Heart left ventricle (tissue), 16 donors: ENCODE measurements at regions of chr16 and their contacts with region 1.

Region 1: DNA sequence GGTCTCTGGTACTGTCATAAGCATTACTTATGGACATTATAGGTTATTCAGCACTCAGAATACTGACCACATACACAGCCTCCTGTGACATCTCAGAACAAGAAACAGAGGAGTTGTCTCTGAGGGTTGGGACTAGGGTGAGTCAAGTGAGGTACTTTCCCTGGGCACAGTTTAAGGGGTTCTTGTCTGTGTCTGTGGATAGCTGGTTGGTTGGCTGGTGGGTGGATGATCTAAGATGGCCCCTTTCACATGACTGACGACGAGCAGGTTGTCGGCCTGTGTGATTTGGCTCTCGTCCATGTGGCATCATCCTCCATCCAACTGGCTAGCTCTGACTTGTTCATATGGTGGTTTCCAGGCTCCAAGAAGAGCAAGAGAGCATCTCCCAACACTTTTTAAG is 163.9 kb downstream of the PRKCB start:
- DNase-seq: no peak
- ATAC-seq: no peak
- H3K4me3 ChIP-seq: no peak overlapping the region
- H3K27ac ChIP-seq: no peak overlapping the region
- H3K4me1 ChIP-seq: no peaks in the 10 kb centered on the region
- H3K27me3 ChIP-seq: peaks cover 0 to 8% (median 0%) of the 10 kb centered on the region in 9 donors
- CTCF ChIP-seq: no peak
- POLR2A ChIP-seq: no peak

Region 2: GRCh38 chr16:24070851-24071250 is 71.2 kb after region 1 on chr16:
- intact Hi-C with region 1: loop called in 1 of 10 experiments (anchors 10 kb)
- DNase-seq: peak in 1 of 5 donors; percentile 24
- ATAC-seq: peak in 3 of 4 donors; percentile 45 to 75 (median 62)
- H3K4me3 ChIP-seq: no peak overlapping the region
- H3K27ac ChIP-seq: no peak overlapping the region
- H3K4me1 ChIP-seq: no peaks in the 10 kb centered on the region
- H3K27me3 ChIP-seq: no peaks in the 10 kb centered on the region
- CTCF ChIP-seq: peak in 11 of 12 donors; percentile 32 to 61 (median 50)
- POLR2A ChIP-seq: no peak